Activated B cell treated with CpG ODN at 0.5 μM for 24 hours (primary cell): ENCODE measurements at regions of chr16 and their contacts with region 1.

Region 1: GRCh38 chr16:30526823-30527635 is 663 bp upstream of the ZNF768 start:
- DNase-seq: peak; percentile 93
- ATAC-seq: peak; percentile 84
- H3K4me3 Mint-ChIP-seq: peak overlapping the region; percentile 89
- H3K27ac Mint-ChIP-seq: peak overlapping the region; percentile 99
- H3K4me1 Mint-ChIP-seq: peaks cover 21% of the 10 kb centered on the region
- H3K27me3 Mint-ChIP-seq: no peaks in the 10 kb centered on the region
- CTCF ChIP-seq: no peak

Region 2: DNA sequence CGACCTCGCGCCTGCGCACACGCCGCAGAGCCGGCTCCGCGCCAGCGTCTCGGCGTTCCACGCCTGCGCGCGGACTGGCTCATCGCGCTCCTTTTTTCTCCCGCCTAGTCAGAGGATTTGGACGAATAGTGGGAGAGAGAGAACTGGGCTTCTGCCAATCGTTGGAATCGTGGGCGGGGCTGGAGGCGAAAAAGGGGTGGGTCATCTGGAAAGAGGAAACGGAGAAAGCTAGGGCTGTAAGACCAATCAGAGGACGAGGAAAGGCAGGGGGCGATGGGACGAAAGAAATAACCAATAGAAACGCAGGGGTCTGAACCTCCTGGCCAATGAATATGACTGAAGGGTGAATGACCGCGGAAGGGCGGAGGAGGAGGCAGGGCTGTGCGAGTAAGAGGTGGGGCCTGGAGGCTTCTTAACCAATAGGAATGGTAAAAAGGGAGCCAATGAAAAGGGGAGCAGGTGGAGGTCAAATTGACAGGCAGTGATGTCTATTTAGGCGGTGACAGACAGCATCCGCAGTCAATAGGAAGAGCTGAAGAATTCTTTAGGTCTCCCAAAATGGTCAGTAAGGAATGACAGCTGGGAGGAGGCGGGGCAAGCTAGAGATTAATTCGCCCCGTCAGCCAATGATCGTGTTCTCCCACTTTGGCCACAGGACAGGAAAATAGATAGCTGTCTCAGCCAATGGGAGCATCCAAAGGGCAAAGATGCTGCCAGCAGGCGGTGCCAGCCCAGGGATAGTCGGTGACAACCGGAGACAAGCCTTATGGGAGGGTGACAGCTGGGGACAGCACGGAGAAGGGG is 156.4 kb before region 1 on chr16 and contains the start of gene TBC1D10B:
- CTCF ChIA-PET with region 1: no interaction called
- POLR2A ChIA-PET with region 1: interaction called, 6 read pairs
- intact Hi-C with region 1: loop called (anchors 2 kb)
- DNase-seq: peak; percentile 92
- ATAC-seq: peak; percentile 83
- H3K4me3 Mint-ChIP-seq: peak within 1 kb of the TSS; percentile 87
- H3K27ac Mint-ChIP-seq: peak within 1 kb of the TSS; percentile 86
- H3K4me1 Mint-ChIP-seq: peaks cover 52% of the 10 kb centered on the region
- H3K27me3 Mint-ChIP-seq: no peaks in the 10 kb centered on the region
- CTCF ChIP-seq: no peak
- total RNA-seq, gene TBC1D10B: 46.3 and 50.2 TPM in 2 replicates

Region 3: GRCh38 chr16:30458561-30459394 is 68.3 kb before region 1 on chr16:
- CTCF ChIA-PET with region 1: no interaction called
- POLR2A ChIA-PET with region 1: interaction called, 18 read pairs
- intact Hi-C with region 1: no loop called
- DNase-seq: peak; percentile 69
- ATAC-seq: peak; percentile 92
- H3K4me3 Mint-ChIP-seq: peak overlapping the region; percentile 66
- H3K27ac Mint-ChIP-seq: peak overlapping the region; percentile 96
- H3K4me1 Mint-ChIP-seq: peaks cover 65% of the 10 kb centered on the region
- H3K27me3 Mint-ChIP-seq: no peaks in the 10 kb centered on the region
- CTCF ChIP-seq: no peak

Region 4: DNA sequence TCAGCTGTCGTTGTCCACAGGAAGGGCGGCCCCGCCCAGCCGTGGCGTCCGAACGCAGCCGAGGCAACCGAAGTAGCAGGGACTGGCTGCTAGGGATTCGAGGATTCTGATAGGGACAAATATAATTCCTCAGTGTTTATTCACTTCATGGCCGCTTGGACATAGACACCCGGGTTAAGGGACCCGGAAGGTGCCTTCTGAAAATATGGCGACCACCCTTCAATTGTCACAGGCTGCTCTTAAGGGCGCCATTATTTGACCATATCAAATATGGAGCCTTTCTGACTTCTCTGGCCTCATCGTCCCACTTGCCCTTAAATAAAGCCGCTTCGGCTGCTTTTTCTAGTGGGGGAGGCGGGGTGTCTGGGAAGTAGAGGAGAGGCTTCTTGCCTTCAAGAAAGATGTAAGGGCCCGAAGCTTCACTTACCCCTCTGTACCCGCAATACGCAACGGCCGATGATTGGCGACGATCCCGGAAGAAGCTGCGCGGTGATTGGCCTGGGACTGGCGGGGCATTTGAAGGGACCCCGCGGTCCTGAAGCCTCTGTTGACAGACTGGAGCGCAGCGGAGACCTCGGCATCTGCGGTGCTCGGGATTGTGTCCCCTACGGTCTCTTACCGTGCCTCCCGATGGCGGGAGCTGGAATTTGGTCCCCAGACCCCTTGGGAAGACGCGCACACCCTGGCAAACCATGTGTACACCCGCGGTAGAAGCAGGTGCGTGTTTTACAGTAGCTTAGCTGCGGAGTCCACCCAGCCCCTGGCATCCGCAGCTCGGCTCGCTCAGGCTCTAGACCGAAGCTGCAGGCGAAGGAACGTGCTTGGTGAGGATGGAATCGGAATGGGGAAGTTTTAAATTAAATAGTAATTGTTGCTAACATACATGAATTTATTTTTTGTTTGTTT is 44.9 kb after region 1 on chr16 and contains the start of gene ZNF688:
- CTCF ChIA-PET with region 1: no interaction called
- POLR2A ChIA-PET with region 1: interaction called, 30 read pairs
- intact Hi-C with region 1: loop called (anchors 1 kb)
- DNase-seq: peak; percentile 78
- ATAC-seq: peak; percentile 86
- H3K4me3 Mint-ChIP-seq: peak within 1 kb of the TSS; percentile 89
- H3K27ac Mint-ChIP-seq: peak within 1 kb of the TSS; percentile 96
- H3K4me1 Mint-ChIP-seq: peaks cover 41% of the 10 kb centered on the region
- H3K27me3 Mint-ChIP-seq: no peaks in the 10 kb centered on the region
- CTCF ChIP-seq: no peak
- total RNA-seq, gene ZNF688: 13.9 and 14.7 TPM in 2 replicates

Region 5: DNA sequence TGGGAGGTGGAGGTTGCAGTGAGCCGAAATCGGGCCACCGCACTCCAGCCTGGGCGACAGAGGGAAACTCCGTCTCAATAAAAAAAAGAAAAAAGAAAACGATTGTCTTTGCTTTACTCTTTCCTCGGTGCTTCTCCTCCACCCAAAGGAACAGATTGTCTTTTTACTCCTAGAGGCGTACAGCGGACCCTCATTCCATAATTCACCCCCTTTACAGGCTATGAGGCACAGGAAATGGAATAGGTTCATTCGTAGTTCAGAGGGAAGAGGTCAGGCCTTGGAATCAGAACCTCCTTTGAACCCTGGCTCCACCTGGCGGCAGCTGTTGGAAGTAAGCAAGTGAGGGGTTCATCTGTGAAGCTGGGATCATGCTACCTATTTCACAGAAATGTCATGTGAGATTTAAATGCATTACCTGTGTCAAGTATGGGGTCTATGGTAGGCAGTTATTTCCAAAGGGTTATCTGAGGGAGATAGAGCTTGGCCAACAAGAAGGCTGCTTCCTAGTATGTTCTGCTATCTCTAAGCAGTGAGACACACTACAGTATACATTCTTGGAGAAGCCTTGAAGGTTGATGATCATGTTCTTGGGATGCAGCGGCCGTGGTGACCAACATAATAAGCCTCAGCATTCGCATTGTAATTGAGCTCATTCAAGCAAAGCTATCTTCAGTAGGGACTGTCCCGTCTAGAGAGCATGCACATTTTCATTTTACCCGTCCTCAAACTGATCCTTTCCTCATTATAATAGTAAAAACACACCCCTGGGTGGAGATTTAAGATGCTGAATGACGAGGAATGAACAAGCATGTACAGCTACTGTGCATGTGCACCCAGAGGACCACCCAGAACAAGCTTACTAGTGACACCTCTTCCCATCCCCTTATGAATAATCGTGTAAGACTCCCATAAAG is 101.9 kb after region 1 on chr16:
- CTCF ChIA-PET with region 1: no interaction called
- POLR2A ChIA-PET with region 1: interaction called, 5 read pairs
- intact Hi-C with region 1: loop called (anchors 2 kb)
- DNase-seq: peak; percentile 84
- ATAC-seq: peak; percentile 93
- H3K4me3 Mint-ChIP-seq: peak overlapping the region; percentile 69
- H3K27ac Mint-ChIP-seq: peak overlapping the region; percentile 76
- H3K4me1 Mint-ChIP-seq: peaks cover 6% of the 10 kb centered on the region
- H3K27me3 Mint-ChIP-seq: no peaks in the 10 kb centered on the region
- CTCF ChIP-seq: peak; percentile 70

Region 6: DNA sequence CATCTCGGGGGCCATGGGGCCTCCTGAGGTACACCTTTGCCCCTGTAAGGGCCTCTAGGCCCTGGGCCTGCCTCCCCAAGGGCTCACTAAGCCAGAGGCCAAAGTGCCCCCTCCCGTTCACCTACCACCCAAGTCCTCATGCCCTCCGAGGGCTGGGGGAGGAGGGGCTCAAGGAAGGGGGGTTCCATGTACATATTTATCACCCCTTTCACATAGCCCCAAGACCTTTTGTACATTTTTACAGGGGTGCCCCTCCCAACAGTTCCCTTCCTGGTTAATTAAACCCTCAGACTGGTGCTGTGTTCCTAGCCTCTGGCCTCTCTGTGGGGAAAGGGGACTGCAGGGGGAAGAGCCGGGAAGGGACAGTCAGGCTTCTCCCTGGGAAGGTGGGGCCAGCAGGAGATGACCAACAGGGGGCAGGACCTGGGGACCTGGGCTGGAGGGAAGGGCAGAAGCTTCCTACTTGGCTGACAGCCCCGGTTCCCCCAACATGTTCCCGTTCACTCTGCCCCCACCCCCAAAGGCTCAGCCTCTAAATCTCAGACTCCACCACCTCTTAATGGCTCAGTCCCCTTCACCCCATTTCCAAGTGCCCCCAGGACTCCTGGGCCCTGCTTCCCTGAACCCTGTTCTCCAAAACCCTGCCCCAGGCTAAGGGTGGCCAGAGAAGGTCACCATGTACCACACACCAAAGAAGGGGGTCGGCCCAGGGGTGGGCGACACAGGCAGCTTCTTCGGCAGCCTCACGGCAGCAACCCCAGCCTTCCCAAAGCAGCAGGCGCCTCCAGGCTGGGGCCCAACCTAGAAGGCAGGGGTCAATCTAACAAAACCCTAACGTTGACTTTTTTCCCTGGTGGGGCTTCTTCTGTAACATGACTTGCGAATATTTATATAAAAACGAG is 143.1 kb after region 1 on chr16:
- CTCF ChIA-PET with region 1: no interaction called
- POLR2A ChIA-PET with region 1: no interaction called
- intact Hi-C with region 1: no loop called
- DNase-seq: no peak
- ATAC-seq: no peak
- H3K4me3 Mint-ChIP-seq: no peak overlapping the region
- H3K27ac Mint-ChIP-seq: peak overlapping the region; percentile 35
- H3K4me1 Mint-ChIP-seq: no peaks in the 10 kb centered on the region
- H3K27me3 Mint-ChIP-seq: no peaks in the 10 kb centered on the region
- CTCF ChIP-seq: no peak

Region 7: DNA sequence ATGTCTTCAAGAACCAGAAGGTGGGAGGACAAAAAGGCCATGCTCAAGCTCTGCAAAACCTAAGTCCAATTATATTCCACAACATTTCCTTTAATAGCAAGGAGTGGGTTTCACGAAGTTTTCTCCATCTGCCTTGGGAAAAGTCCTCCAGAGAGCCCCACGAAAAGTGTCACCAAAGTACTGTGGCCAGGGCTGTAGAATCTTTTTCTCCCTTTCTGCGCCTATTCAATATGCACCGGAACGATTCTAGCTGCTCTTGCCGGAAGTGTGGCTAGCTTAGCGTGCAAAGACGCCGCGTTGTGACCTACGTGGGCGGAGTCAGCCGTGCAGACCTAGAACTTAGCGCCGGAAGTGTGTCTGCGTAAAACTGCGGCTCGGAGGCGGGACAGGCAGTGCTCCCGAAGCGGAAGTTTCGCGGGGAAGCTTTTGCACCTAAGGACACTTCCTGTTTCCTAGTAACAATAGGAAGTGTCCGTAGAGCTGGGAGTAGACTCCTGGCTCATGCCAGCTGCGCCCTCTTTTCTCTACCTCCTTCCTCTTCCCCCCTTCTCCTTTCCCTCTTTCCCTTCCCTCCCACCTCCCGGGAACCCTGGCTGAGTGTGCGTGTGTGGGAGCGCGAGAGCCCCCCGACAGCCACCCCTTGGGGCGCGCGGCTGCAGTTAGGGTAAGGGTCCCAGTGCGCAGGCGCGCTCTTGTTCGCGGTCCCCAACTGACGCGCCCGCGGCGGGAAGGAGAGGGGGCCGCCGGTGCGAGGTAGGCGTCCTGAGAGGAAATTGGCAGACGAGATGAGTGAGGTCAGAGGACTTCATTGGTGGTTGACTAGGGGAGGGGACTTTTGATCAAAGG is 547.2 kb after region 1 on chr16 and contains the starts of genes ZNF646 and ZNF668:
- CTCF ChIA-PET with region 1: no interaction called
- POLR2A ChIA-PET with region 1: interaction called, 3 read pairs
- intact Hi-C with region 1: loop called (anchors 2 kb)
- DNase-seq: peak; percentile 86
- ATAC-seq: peak; percentile 83
- H3K4me3 Mint-ChIP-seq: peak within 1 kb of the TSS; percentile 96
- H3K27ac Mint-ChIP-seq: peak within 1 kb of the TSS; percentile 91
- H3K4me1 Mint-ChIP-seq: peaks cover 34% of the 10 kb centered on the region
- H3K27me3 Mint-ChIP-seq: no peaks in the 10 kb centered on the region
- CTCF ChIP-seq: no peak
- total RNA-seq, gene ZNF646: 32.4 and 32.5 TPM in 2 replicates
- total RNA-seq, gene ZNF668: 8.3 and 10.1 TPM in 2 replicates

Region 8: DNA sequence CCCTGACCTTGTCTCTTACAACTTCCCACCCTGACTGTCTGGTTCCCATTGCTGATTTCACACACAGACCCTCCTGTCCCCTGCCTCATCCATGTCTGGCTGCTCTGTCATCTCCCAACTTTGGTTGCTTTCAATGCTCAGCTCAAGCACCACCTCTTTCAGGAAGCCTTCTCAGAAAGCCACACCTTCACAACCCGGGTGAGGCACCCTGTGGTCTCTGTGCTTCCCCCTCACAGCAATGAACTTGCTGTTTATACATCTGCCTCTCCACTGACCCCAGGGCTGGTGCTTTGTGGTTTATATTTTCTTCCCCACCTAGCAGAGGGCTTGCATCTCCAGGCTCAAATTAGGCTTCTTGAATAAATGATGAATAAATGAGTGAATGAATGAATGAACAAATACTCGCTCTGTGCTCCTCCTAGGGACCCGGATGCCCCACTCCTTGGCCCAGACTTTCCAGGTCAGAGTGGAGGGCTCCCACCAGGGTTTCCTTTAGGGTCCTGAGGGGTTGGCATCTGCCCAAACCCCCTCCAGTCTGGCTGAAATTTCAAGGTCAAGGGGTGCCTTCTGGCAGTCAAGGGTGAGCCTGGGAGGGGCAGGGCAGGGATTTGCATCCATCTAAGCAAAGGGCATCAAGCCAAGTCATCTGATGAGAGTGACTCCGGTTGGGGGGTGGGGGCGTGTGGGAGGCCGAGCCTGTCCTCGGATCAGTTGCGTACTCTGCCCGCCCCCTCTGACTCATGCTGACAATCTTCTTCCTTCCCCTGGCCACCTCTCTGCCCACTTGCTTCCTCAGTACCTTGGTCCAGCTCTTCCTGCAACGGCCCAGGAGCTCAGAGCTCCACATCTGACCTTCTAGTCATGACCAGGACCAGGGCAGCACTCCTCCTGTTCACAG is 827.6 kb after region 1 on chr16 and contains the start of gene ITGAX:
- CTCF ChIA-PET with region 1: no interaction called
- POLR2A ChIA-PET with region 1: no interaction called
- intact Hi-C with region 1: no loop called
- DNase-seq: peak; percentile 42
- ATAC-seq: peak; percentile 72
- H3K4me3 Mint-ChIP-seq: peak within 1 kb of the TSS; percentile 78
- H3K27ac Mint-ChIP-seq: peak within 1 kb of the TSS; percentile 93
- H3K4me1 Mint-ChIP-seq: peaks cover 74% of the 10 kb centered on the region
- H3K27me3 Mint-ChIP-seq: no peaks in the 10 kb centered on the region
- CTCF ChIP-seq: no peak
- total RNA-seq, gene ITGAX: 81.9 and 100 TPM in 2 replicates